Dendritic cell treated with granulocyte-macrophage colony-stimulating factor and Interleukin-4, amounts not matched to agents 40 ng/mL and 50 ng/mL, for 4 days (primary cell): ENCODE measurements at regions of chr20 and their contacts with region 1.

Region 1: GRCh38 chr20:62616728-62617621 is 25.3 kb upstream of the SLCO4A1 start:
- H3K4me3 Mint-ChIP-seq: no peak overlapping the region
- H3K27ac Mint-ChIP-seq: peak overlapping the region; percentile 92
- H3K4me1 Mint-ChIP-seq: peaks cover 41% of the 10 kb centered on the region
- H3K27me3 Mint-ChIP-seq: peaks cover 6% of the 10 kb centered on the region

Region 2: DNA sequence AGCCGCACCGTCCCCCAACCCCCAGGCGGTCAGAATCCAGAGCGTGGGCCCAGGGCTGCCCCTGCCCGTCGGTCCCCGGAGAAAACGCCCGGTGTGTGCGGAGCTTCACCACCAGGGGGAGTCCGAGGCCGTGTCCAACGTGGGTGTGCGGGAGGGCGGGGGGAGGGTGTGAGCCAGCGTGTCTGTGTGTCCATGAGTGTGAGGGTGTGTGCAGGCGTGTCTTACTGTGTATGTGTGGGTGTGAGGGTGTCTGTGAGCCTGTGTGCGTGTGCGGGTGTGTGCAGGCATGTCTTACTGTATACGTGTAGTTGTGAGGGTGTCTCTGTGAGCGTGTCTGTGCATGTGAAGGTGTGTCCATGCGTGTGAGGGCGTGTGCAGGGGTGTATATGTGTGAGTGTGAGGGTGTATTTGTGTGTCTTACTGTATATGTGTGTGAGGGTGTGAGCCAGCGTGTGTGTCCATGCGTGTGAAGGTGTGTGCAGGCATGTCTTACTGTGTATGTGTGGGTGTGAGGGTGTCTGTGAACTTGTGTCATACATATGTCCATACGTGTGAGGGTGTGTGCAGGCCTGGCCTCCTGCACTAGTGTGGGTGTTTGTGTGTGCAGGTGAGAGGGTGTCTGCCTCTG is 116.6 kb before region 1 on chr20:
- intact Hi-C with region 1: loop called (anchors 2 kb)
- H3K4me3 Mint-ChIP-seq: no peak overlapping the region
- H3K27ac Mint-ChIP-seq: peak overlapping the region; percentile 20
- H3K4me1 Mint-ChIP-seq: peaks cover 30% of the 10 kb centered on the region
- H3K27me3 Mint-ChIP-seq: peaks cover 11% of the 10 kb centered on the region